ENCODE measurements at regions of chr2 and their contacts with region 1.

Region 1: DNA sequence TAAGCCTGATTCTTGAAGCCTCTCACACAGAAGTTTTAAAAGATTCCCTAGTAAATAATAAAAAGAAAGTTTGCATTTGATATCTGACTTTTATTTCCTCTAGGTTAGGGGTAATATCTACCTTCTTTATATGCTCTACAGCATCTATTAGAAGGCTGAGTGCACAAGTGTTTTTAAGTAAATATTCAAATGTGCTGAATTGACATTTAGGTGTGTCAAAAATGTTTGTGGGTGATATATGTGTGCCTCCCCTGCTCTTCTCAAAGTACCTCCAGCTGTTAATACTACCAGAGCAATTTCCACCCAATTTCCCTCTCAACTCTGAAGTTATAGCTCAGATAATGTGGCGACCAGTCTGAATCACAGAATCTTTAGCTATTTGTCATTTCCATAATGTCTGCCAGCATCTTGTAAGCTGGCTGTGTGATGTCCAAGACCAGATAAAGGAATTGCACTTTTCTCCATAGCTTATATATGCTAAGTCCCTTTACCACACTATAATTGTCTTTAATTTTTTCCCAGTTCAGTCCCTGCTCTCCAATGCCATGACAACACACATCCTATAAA is 24.4 kb upstream of the ERMN start:
- DNase-seq: no peak
- ATAC-seq: no peak
- H3K4me3 ChIP-seq: no peak overlapping the region
- H3K27ac ChIP-seq: no peak overlapping the region
- H3K4me1 ChIP-seq: no peaks in the 10 kb centered on the region
- H3K27me3 ChIP-seq: no peaks in the 10 kb centered on the region
- CTCF ChIP-seq: no peak
- POLR2A ChIP-seq: no peak

Region 2: GRCh38 chr2:157611110-157611509 is 261.1 kb after region 1 on chr2:
- intact Hi-C with region 1: loop called (anchors 5 kb)
- DNase-seq: no peak
- ATAC-seq: no peak
- H3K4me3 ChIP-seq: no peak overlapping the region
- H3K27ac ChIP-seq: no peak overlapping the region
- H3K4me1 ChIP-seq: no peaks in the 10 kb centered on the region
- H3K27me3 ChIP-seq: no peaks in the 10 kb centered on the region
- CTCF ChIP-seq: no peak
- POLR2A ChIP-seq: no peak

Measured in body of pancreas (tissue), 4 donors.